Activated CD8-positive, alpha-beta memory T cell treated with anti-CD3 and anti-CD28 coated beads, Interleukin-2, amount 10 ng/mL, durations not matched to agents 7 days and 5 days (primary cell): ENCODE measurements at regions of chr10 and their contacts with region 1.

Region 1: GRCh38 chr10:71771821-71772617 is 1.3 kb downstream of the VSIR start:
- DNase-seq: no peak
- ATAC-seq: no peak
- H3K4me3 Mint-ChIP-seq: peak overlapping the region; percentile 84
- H3K27ac Mint-ChIP-seq: peak overlapping the region; percentile 90
- H3K4me1 Mint-ChIP-seq: peaks cover 83% of the 10 kb centered on the region
- H3K27me3 Mint-ChIP-seq: no peaks in the 10 kb centered on the region

Region 2: DNA sequence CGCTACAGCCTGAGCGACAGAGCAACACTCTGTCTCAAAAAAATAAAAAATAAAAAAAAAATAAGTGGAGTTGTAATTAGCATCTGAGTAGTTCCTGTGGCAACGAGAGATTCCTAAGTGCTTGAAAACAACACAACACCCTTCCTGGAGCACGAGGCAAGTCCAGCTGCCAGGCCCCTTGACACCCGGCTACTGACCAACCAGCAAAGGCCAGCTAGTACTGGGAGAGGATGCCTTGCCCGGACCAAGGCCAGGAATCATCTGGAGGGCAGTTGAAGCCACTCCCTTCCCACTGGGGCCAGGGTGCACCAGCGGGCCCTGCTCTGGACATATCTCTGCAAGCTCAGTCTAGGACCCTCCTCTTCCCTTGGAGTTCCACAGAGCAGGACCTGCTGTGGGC is 53.0 kb before region 1 on chr10:
- CTCF ChIA-PET with region 1: interaction called, 55 read pairs
- DNase-seq: no peak
- ATAC-seq: no peak
- H3K4me3 Mint-ChIP-seq: no peak overlapping the region
- H3K27ac Mint-ChIP-seq: no peak overlapping the region
- H3K4me1 Mint-ChIP-seq: peaks cover 13% of the 10 kb centered on the region
- H3K27me3 Mint-ChIP-seq: peaks cover 3% of the 10 kb centered on the region

Region 3: GRCh38 chr10:71748671-71749191 is 23.3 kb before region 1 on chr10:
- CTCF ChIA-PET with region 1: interaction called, 35 read pairs
- DNase-seq: peak; percentile 95
- ATAC-seq: peak; percentile 85
- H3K4me3 Mint-ChIP-seq: peak overlapping the region; percentile 56
- H3K27ac Mint-ChIP-seq: peak overlapping the region; percentile 97
- H3K4me1 Mint-ChIP-seq: peaks cover 94% of the 10 kb centered on the region
- H3K27me3 Mint-ChIP-seq: no peaks in the 10 kb centered on the region

Region 4: GRCh38 chr10:71782917-71783490 is 11.0 kb after region 1 on chr10:
- CTCF ChIA-PET with region 1: interaction called, 11 read pairs
- DNase-seq: no peak
- ATAC-seq: no peak
- H3K4me3 Mint-ChIP-seq: no peak overlapping the region
- H3K27ac Mint-ChIP-seq: no peak overlapping the region
- H3K4me1 Mint-ChIP-seq: peaks cover 13% of the 10 kb centered on the region
- H3K27me3 Mint-ChIP-seq: no peaks in the 10 kb centered on the region